Activated CD8-positive, alpha-beta memory T cell treated with anti-CD3 and anti-CD28 coated beads, Interleukin-2, amount 10 ng/mL, durations not matched to agents 7 days and 5 days (primary cell): ENCODE measurements at regions of chr6 and their contacts with region 1.

Region 1: GRCh38 chr6:30730601-30731435 is 10.7 kb downstream of the TUBB start:
- DNase-seq: peak; percentile 91
- ATAC-seq: peak; percentile 94
- H3K4me3 Mint-ChIP-seq: no peak overlapping the region
- H3K27ac Mint-ChIP-seq: peak overlapping the region; percentile 61
- H3K4me1 Mint-ChIP-seq: peaks cover 38% of the 10 kb centered on the region
- H3K27me3 Mint-ChIP-seq: no peaks in the 10 kb centered on the region

Region 2: GRCh38 chr6:30614843-30615218 is 116.0 kb before region 1 on chr6:
- CTCF ChIA-PET with region 1: interaction called, 30 read pairs
- DNase-seq: peak; percentile 94
- ATAC-seq: peak; percentile 59
- H3K4me3 Mint-ChIP-seq: peak overlapping the region; percentile 97
- H3K27ac Mint-ChIP-seq: peak overlapping the region; percentile 100
- H3K4me1 Mint-ChIP-seq: peaks cover 57% of the 10 kb centered on the region
- H3K27me3 Mint-ChIP-seq: peaks cover 3% of the 10 kb centered on the region

Region 3: GRCh38 chr6:30686908-30687658 is 43.7 kb before region 1 on chr6:
- CTCF ChIA-PET with region 1: interaction called, 936 read pairs
- DNase-seq: peak; percentile 88
- ATAC-seq: peak; percentile 37
- H3K4me3 Mint-ChIP-seq: peak overlapping the region; percentile 90
- H3K27ac Mint-ChIP-seq: peak overlapping the region; percentile 87
- H3K4me1 Mint-ChIP-seq: peaks cover 38% of the 10 kb centered on the region
- H3K27me3 Mint-ChIP-seq: no peaks in the 10 kb centered on the region

Region 4: GRCh38 chr6:30717042-30717844 is 13.6 kb before region 1 on chr6 and contains the start of gene MDC1:
- CTCF ChIA-PET with region 1: interaction called, 35 read pairs
- DNase-seq: peak; percentile 100
- ATAC-seq: peak; percentile 79
- H3K4me3 Mint-ChIP-seq: peak within 1 kb of the TSS; percentile 99
- H3K27ac Mint-ChIP-seq: peak within 1 kb of the TSS; percentile 100
- H3K4me1 Mint-ChIP-seq: peaks cover 52% of the 10 kb centered on the region
- H3K27me3 Mint-ChIP-seq: no peaks in the 10 kb centered on the region
- total RNA-seq, gene MDC1: 67.4 to 83.9 TPM

Region 5: DNA sequence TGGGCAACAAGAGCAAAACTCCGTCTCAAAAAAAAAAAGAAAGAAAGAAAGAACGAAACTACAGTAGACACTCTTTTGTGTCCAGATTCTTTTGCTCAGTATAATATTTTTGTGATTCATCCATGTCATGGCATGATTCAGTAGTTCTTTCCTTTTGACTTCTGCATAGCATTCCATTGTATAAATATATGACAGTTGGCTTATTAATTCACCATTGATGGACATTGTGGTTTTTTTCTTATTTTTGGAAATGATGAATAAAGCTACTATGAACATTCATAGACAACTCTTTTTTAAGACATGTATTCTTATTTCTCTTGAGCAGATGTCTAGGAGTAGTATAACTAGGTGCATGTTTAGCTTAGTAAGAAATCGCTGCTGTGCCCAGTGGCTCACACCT is 23.8 kb after region 1 on chr6:
- CTCF ChIA-PET with region 1: no interaction called
- DNase-seq: no peak
- ATAC-seq: no peak
- H3K4me3 Mint-ChIP-seq: no peak overlapping the region
- H3K27ac Mint-ChIP-seq: no peak overlapping the region
- H3K4me1 Mint-ChIP-seq: peaks cover 9% of the 10 kb centered on the region
- H3K27me3 Mint-ChIP-seq: no peaks in the 10 kb centered on the region

Region 6: GRCh38 chr6:30877419-30878371 is 146.9 kb after region 1 on chr6:
- CTCF ChIA-PET with region 1: interaction called, 12 read pairs
- DNase-seq: peak; percentile 86
- ATAC-seq: peak; percentile 96
- H3K4me3 Mint-ChIP-seq: peak overlapping the region; percentile 66
- H3K27ac Mint-ChIP-seq: peak overlapping the region; percentile 68
- H3K4me1 Mint-ChIP-seq: peaks cover 12% of the 10 kb centered on the region
- H3K27me3 Mint-ChIP-seq: peaks cover 4% of the 10 kb centered on the region